ENCODE measurements at regions of chr13 and their contacts with region 1.

Region 1: DNA sequence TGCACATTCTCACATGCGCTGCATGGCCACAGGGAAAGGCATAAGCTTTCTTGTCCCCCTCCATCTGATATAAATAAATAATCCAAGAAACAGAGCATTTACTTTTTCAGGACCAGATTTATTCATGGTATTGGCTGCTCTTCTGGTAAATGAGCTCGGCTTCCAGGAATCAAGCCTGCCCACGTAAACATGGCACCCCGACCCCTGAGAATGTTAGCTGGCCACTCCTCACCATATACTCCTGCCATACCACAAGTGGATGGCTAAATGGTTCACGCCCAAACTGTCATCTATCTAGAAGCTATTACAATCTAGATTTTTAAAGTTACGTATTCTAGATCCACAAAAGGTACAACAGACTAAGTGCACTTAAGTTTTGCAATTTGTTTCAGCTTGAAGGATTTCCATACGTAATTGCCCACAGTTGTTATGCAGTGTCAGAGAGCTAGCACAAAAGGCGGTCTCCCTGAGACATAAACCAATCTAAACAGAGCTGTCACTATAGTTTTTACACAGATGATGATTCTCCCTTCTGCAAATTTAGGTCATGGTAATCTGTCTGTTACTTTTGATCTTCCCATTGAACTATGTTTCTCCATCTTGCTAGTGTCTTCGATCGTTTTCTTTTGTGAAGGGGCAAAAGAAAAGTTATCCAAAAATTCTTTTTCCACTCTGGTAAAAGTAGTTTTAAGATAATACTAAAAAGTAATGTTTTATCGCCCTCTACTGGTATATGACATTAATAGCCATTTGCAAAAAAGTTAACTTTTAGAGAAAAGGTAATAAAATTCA is 16.2 kb upstream of the FOXO1 start:
- DNase-seq: no peak
- H3K4me3 Mint-ChIP-seq: no peak overlapping the region
- H3K27ac Mint-ChIP-seq: no peak overlapping the region
- H3K4me1 Mint-ChIP-seq: peaks cover 12% of the 10 kb centered on the region
- H3K27me3 Mint-ChIP-seq: no peaks in the 10 kb centered on the region

Region 2: DNA sequence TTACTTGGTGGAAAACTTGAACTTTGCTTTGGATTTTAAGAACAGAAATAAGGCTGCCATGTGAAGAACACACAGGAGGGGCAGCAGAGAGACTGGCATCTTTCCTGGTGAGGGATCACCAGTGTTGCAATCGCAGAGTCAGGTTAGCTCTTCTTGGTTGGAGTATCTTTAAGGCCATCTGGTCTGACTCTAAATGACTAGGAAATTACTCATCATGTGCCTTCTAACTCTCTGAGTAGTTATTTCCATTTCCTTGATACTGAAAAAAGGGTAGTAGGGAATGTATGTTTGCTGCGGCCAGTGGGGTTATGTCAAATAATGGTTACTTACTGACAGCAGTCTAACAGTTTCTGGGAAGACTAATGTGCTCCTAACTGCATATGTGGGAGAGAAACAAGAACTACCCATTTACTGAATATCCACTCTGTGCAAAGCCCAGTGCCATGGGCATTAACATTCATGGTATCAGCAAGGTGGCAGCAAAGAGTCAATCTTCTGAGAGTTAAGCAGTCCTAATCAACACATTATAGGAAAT is 905.1 kb before region 1 on chr13:
- CTCF ChIA-PET with region 1: interaction called, 14 read pairs
- intact Hi-C with region 1: loop called (anchors 2 kb)
- DNase-seq: peak; percentile 70
- H3K4me3 Mint-ChIP-seq: no peak overlapping the region
- H3K27ac Mint-ChIP-seq: peak overlapping the region; percentile 80
- H3K4me1 Mint-ChIP-seq: peaks cover 46% of the 10 kb centered on the region
- H3K27me3 Mint-ChIP-seq: no peaks in the 10 kb centered on the region

Region 3: GRCh38 chr13:39942552-39943273 is 739.9 kb before region 1 on chr13:
- CTCF ChIA-PET with region 1: interaction called, 30 read pairs
- intact Hi-C with region 1: loop called (anchors 1 kb)
- DNase-seq: peak; percentile 82
- H3K4me3 Mint-ChIP-seq: no peak overlapping the region
- H3K27ac Mint-ChIP-seq: no peak overlapping the region
- H3K4me1 Mint-ChIP-seq: peaks cover 7% of the 10 kb centered on the region
- H3K27me3 Mint-ChIP-seq: no peaks in the 10 kb centered on the region

Region 4: DNA sequence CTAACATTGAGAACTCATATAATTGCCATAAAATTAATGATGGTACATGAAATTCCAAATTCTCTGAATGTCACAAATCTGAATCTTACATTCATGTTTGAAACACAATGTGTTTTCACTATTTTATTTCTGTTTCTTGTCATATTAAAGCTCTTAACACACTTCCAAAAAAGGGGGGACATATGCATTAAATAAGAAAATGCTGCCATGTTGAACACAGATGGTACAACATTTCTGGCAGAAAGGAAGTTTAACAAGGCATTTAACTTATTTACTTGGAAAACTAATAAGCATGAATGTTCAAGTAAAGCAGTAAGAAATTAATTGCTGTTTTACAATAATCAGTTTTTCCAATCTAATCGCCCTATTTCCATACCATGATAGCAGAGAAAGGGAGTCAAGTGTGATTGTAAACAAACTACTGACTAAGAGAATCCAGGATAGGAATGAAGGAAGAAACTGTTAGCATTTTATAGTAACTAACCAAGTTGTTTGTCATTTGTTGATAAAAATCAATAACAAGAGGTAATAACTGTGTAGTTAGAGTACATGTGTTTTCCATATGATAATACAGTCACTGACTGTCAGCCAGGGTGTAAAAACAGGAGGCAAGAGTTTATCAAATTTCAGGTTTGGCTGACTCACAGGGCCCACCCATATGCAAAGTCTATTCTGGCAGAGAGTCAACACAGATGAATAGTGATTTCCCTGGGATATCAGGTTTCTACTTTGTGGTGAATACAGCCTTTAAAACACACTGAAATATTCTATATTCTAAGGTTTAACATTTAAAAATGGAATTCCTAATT is 10.5 kb before region 1 on chr13:
- CTCF ChIA-PET with region 1: interaction called, 22 read pairs
- intact Hi-C with region 1: no loop called
- DNase-seq: peak; percentile 35
- H3K4me3 Mint-ChIP-seq: no peak overlapping the region
- H3K27ac Mint-ChIP-seq: no peak overlapping the region
- H3K4me1 Mint-ChIP-seq: peaks cover 36% of the 10 kb centered on the region
- H3K27me3 Mint-ChIP-seq: no peaks in the 10 kb centered on the region